Colonic mucosa (tissue), 4 donors: ENCODE measurements at regions of chr12 and their contacts with region 1.

Region 1: GRCh38 chr12:52582971-52583456 is 9.4 kb upstream of the KRT74 start:
- DNase-seq: peak; percentile 74
- H3K4me3 ChIP-seq: no peak overlapping the region
- H3K27ac ChIP-seq: no peak overlapping the region
- H3K4me1 ChIP-seq: no peaks in the 10 kb centered on the region
- H3K27me3 ChIP-seq: no peaks in the 10 kb centered on the region
- CTCF ChIP-seq: peak; percentile 60

Region 2: DNA sequence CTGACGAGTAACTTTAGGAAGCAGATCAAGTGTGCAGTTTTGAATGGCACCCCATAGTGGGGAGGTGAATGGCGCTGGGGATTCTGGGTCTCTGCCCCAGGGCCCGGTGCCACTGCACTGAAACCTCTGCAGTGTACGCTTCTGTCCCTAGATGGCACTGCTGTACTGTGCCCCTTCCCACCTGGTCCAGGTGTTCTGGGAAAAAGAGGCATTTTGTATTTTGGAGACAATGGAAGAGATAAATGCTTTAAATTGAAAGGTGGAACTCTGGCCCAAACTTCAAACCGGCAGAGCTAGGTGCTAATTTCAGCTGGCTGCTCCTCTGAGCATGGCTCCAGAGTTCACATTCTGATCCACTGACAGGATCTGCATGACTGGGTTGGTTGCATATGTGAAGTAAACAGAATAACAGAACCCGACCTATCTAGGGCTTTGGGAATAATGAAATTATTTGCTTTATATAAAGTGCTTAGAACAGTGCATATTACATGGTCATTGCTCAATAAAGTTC is 443.4 kb before region 1 on chr12:
- intact Hi-C with region 1: loop called (anchors 5 kb)
- DNase-seq: peak; percentile 62
- H3K4me3 ChIP-seq: no peak overlapping the region
- H3K27ac ChIP-seq: no peak overlapping the region
- H3K4me1 ChIP-seq: no peaks in the 10 kb centered on the region
- H3K27me3 ChIP-seq: no peaks in the 10 kb centered on the region
- CTCF ChIP-seq: peak; percentile 71

Region 3: DNA sequence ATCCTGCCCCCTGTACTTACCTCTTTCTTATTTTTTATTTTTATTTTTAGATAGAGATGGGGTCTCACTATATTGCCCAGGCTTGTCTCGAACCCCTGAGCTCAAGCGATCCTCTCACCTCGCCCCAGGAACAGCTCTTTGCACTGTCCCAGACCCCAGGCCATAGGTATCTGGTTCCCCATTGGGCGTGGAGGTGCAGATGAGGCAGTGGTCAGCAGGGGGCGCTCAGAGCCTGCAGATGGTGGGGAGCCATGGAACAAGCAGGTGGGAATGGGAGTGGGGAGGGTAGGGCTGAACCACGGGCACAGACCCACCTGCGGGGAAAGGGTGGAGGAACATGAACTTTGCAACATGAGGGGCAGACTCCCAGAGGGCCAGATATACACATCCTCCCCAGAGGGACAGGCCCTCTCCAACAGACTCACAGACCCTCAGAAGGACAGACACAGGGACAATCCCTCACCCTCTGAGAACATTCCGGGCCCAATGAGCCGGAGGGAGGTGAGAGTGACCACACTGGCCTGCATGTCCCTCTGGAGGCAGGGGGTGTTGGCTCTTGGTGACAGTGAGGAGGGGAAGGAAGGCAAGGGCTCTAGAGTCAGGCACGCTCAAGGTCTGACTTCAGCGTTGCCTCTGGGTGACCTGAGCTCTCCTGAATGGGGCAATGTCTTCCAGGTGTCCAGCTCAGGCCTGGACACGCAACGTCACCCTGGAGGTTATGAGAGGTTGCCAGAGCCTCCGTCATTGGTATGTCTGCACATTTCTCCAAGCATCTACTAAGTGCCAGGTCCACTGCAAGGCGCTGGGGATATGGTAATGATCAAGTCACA is 426.1 kb before region 1 on chr12:
- intact Hi-C with region 1: loop called (anchors 5 kb)
- DNase-seq: peak; percentile 85
- H3K4me3 ChIP-seq: no peak overlapping the region
- H3K27ac ChIP-seq: no peak overlapping the region
- H3K4me1 ChIP-seq: peaks cover 2% of the 10 kb centered on the region
- H3K27me3 ChIP-seq: no peaks in the 10 kb centered on the region
- CTCF ChIP-seq: peak; percentile 91

Region 4: GRCh38 chr12:52372216-52373154 is 210.5 kb before region 1 on chr12:
- intact Hi-C with region 1: loop called (anchors 5 kb)
- DNase-seq: peak; percentile 77
- H3K4me3 ChIP-seq: no peak overlapping the region
- H3K27ac ChIP-seq: no peak overlapping the region
- H3K4me1 ChIP-seq: no peaks in the 10 kb centered on the region
- H3K27me3 ChIP-seq: no peaks in the 10 kb centered on the region
- CTCF ChIP-seq: peak; percentile 66

Region 5: GRCh38 chr12:52865090-52865944 is 282.3 kb after region 1 on chr12:
- intact Hi-C with region 1: loop called (anchors 5 kb)
- DNase-seq: peak; percentile 79
- H3K4me3 ChIP-seq: no peak overlapping the region
- H3K27ac ChIP-seq: no peak overlapping the region
- H3K4me1 ChIP-seq: no peaks in the 10 kb centered on the region
- H3K27me3 ChIP-seq: no peaks in the 10 kb centered on the region
- CTCF ChIP-seq: peak; percentile 69

Region 6: DNA sequence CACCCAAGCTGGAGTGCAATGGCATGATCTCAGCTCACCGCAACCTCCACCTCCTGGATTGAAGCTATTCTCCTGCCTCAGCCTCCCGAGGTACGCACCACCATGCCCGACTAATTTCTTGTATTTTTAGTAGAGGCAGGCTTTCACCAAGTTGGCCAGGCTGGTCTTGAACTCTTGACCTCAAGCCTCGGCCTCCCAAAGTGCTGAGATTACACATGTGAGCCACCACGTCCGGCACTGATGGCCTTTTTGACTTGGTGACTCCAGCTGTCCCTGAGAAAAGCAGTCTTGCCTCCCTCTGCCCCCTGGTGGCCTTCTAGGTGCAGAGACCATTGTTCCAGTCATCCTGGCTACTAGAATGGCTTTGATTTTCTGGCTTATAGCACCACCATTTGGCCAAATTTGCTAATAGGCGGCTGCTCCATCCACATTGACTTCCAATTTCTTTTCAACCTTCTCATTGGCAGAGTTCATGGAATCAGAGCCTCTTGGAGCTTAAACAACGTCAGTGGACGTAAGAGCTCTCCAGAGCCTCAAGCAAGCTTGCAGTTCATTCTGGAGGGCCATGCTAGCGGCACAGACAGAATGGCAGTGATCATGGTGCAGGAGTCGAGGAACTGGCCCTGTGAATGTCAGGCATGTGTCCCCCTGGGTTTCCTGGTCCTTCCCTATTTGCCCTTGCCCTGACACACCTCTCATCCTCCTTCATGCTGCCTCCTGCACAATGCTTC is 397.8 kb after region 1 on chr12:
- intact Hi-C with region 1: loop called (anchors 10 kb)
- DNase-seq: peak; percentile 95
- H3K4me3 ChIP-seq: no peak overlapping the region
- H3K27ac ChIP-seq: no peak overlapping the region
- H3K4me1 ChIP-seq: no peaks in the 10 kb centered on the region
- H3K27me3 ChIP-seq: no peaks in the 10 kb centered on the region
- CTCF ChIP-seq: peak; percentile 94